Gastrocnemius medialis (tissue), 4 donors: ENCODE measurements at regions of chr6 and their contacts with region 1.

Region 1: DNA sequence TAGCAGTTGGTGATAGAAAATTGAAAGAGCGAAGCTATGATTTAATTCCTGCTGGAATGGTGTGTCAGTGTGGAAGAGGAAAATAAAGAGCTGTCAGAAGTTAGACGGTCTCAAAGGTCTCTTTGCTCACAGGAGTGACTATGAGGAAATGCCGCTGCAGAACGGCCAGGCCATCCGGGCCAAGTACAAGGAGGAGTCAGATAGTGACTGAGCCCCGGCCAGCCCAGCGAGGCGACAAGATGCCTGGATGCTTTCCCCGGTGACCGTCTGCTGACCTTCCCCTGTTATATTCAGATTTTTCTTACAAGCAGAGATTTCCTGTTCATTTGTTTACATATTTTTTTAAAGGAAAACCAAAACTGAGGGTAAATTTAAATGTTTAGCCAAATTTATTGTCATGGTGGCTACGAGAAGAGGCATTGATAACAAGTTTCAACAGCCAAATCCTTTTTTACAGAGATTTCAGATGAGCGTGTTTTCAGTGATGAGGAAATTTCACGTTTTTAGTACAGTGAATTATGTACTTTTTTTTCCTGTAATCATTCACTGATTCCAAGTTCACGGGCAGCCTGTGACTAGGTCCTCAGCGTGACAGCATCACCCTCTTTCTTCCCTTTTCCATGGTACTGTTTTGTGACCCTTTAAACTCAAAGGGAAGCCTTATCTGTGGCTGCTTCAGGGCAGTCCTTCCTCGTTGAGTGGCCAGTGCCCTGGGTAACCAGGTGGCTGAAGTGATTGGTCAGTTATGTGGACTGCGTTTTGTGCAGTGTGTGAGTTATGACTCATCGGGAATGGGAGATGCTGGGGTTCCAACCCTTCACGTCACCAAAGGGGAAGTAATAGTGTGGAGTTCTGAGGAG is 12.6 kb downstream of the DYNLT1 start:
- DNase-seq: peak; percentile 76 to 91
- ATAC-seq: peak; percentile 82
- H3K4me3 ChIP-seq: peak overlapping the region in 1 of 4 donors; percentile 8
- H3K27ac ChIP-seq: peak overlapping the region; percentile 71 to 86 (median 80)
- H3K4me1 ChIP-seq: peaks cover 21 to 33% of the 10 kb centered on the region in 2 donors
- H3K27me3 ChIP-seq: no peaks in the 10 kb centered on the region
- CTCF ChIP-seq: peak in 1 of 5 experiments; percentile 3
- POLR2A ChIP-seq: peak in 1 of 2 donors; percentile 19

Region 2: DNA sequence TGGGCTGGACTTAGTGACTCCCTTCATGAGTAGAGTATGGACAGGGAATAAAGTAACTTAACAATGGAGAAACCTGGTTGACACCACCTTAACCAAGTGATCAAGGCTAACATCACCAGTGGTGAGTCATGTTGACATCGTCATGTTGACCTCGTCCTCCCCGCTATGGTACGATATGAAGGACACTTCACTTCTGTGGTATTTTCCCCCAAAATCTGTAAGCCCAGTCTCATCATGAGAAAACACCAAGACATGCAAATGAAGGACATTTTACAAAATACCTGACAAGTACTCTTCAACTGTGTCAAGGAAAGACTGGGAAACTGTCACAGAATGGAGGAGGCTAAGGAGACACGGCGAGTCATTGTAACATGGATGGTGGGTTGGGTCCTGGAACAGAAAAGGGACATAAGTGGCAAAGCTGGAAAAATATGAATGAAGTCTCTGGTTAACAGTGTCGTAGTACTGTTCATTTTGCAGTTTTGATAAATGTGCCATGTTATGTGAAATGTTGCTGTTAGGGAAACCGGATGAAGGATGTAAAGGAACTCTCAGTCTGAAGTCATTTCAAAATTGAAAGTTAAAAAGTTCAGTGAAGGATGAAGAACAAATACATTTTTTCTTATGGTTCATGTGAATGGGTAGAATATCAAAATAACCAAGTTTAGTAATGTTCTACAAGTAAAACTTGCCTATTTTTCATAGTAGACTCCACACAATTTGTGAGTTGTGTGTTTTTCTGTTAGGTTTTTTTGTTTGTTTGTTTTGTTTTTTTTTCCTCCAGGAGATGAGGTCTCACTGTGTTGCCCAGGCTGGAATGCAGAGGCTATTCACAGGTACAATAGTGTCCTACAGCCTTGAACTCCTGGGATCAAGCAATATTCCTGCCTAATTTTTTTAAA is 1556.1 kb before region 1 on chr6:
- in situ Hi-C with region 1: no loop called
- intact Hi-C with region 1: no loop called
- DNase-seq: no peak
- ATAC-seq: no peak
- H3K4me3 ChIP-seq: no peak overlapping the region
- H3K27ac ChIP-seq: no peak overlapping the region
- H3K4me1 ChIP-seq: peaks cover 25 to 43% of the 10 kb centered on the region in 2 donors
- H3K27me3 ChIP-seq: no peaks in the 10 kb centered on the region
- CTCF ChIP-seq: no peak
- POLR2A ChIP-seq: no peak

Region 3: DNA sequence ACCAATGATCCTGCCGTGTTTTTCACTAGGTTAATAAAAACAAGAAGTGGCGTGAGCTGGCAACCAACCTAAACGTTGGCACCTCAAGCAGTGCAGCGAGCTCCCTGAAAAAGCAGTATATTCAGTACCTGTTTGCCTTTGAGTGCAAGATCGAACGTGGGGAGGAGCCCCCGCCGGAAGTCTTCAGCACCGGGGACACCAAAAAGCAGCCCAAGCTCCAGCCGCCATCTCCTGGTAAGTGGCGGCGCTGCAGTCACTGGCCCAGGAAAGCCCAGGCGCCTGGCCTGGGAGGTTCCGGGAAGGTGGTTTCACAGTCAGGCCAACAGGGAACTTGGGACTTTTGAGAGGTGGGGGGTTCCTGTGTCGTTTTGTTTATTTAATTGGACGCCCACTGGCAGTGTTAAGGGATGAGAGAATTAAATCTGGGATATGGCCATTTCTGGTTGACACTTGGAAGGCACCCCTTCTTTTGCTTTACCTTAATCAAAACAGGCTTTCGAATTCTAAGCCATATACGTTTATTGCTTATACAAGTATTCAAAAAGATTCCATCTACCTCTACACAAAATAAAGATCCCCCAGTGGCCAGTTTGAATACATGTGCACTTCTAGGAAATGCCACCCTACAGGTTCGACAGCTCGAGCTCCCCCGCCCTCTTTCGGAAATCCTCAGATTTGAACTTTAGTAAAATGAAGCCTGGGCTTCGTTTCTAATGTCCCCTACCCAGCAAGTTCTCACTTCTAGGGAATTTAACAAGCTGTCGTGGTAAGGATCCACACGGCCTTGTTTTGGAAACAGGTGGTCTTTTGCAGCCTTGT is 1447.5 kb before region 1 on chr6:
- in situ Hi-C with region 1: no loop called
- intact Hi-C with region 1: loop called (anchors 5 kb)
- DNase-seq: peak; percentile 41 to 65
- ATAC-seq: peak; percentile 22 to 40
- H3K4me3 ChIP-seq: no peak overlapping the region
- H3K27ac ChIP-seq: peak overlapping the region in 3 of 4 donors; percentile 9 to 46 (median 24)
- H3K4me1 ChIP-seq: peaks cover 26 to 27% of the 10 kb centered on the region in 2 donors
- H3K27me3 ChIP-seq: no peaks in the 10 kb centered on the region
- CTCF ChIP-seq: peak; percentile 83 to 92 (median 90)
- POLR2A ChIP-seq: no peak

Region 4: GRCh38 chr6:158488065-158488464 is 143.8 kb before region 1 on chr6:
- in situ Hi-C with region 1: no loop called
- intact Hi-C with region 1: no loop called
- DNase-seq: no peak
- ATAC-seq: no peak
- H3K4me3 ChIP-seq: no peak overlapping the region
- H3K27ac ChIP-seq: no peak overlapping the region
- H3K4me1 ChIP-seq: no peaks in the 10 kb centered on the region
- H3K27me3 ChIP-seq: no peaks in the 10 kb centered on the region
- CTCF ChIP-seq: no peak
- POLR2A ChIP-seq: no peak

Region 5: DNA sequence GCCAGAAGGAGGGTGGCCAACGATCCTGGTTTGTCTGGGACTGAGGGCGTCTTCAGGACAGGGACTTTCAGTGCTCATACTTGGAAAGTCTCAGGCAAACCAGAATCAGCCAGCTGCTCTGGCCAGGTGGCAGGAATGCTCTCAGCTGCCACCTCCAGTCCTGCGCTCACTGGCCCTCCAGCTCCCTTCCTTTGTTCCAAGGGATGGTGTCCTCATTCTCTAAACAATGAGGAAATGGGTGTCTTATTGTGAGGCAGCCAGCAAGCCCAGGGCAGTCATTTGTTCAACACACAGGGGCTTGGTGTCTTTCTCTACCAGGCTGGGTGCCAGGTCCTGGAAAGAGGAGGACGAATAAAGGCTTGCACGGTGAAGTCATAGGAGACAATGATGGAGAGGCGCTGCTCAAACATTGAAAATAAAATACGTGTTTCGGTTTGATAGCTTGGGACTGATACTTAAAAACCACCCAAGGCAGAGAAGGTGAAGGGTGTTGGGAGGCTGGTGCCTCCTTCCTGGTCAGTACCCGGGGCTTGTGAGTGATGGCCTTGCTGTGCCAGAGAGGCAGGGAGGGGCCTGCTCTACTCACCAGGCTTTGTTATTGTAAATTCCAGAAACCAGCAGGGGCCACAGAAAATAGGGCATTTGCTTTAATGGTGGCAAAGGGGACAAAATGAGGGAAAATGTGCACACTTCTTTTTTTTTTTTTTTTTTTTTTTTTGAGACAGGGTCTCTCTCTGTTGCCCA is 83.3 kb before region 1 on chr6:
- in situ Hi-C with region 1: no loop called
- intact Hi-C with region 1: no loop called
- DNase-seq: no peak
- ATAC-seq: no peak
- H3K4me3 ChIP-seq: no peak overlapping the region
- H3K27ac ChIP-seq: no peak overlapping the region
- H3K4me1 ChIP-seq: no peaks in the 10 kb centered on the region
- H3K27me3 ChIP-seq: no peaks in the 10 kb centered on the region
- CTCF ChIP-seq: no peak
- POLR2A ChIP-seq: no peak

Region 6: GRCh38 chr6:158660333-158660754 is 28.4 kb after region 1 on chr6:
- in situ Hi-C with region 1: no loop called
- intact Hi-C with region 1: loop called (anchors 1 kb)
- DNase-seq: no peak
- ATAC-seq: no peak
- H3K4me3 ChIP-seq: no peak overlapping the region
- H3K27ac ChIP-seq: no peak overlapping the region
- H3K4me1 ChIP-seq: peaks cover 14 to 30% of the 10 kb centered on the region in 2 donors
- H3K27me3 ChIP-seq: no peaks in the 10 kb centered on the region
- CTCF ChIP-seq: peak in 3 of 5 experiments; percentile 18 to 41 (median 19)
- POLR2A ChIP-seq: no peak

Region 7: DNA sequence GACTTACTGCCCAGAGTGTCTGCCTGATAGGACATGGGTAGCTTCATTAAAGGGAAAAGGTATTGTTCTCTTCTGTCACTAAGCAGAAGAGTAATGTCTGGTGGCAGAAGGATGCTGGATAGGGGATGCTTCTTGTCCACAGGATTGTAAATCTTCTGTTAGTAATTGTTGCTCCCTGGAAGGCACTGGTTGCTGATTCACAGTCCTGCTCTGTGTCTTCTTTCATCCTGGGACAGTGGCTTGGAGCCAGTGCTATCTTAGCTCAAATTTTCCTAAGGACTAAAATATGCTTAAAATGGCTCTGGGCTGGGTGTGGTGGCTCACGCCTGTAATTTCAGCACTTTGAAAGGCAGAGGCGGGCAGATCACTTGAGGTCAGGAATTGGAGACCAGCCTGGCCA is 65.9 kb after region 1 on chr6:
- in situ Hi-C with region 1: loop called in 2 of 4 experiments (anchors 5 kb)
- intact Hi-C with region 1: no loop called
- DNase-seq: no peak
- ATAC-seq: no peak
- H3K4me3 ChIP-seq: no peak overlapping the region
- H3K27ac ChIP-seq: no peak overlapping the region
- H3K4me1 ChIP-seq: no peaks in the 10 kb centered on the region
- H3K27me3 ChIP-seq: no peaks in the 10 kb centered on the region
- CTCF ChIP-seq: no peak
- POLR2A ChIP-seq: no peak

Region 8: DNA sequence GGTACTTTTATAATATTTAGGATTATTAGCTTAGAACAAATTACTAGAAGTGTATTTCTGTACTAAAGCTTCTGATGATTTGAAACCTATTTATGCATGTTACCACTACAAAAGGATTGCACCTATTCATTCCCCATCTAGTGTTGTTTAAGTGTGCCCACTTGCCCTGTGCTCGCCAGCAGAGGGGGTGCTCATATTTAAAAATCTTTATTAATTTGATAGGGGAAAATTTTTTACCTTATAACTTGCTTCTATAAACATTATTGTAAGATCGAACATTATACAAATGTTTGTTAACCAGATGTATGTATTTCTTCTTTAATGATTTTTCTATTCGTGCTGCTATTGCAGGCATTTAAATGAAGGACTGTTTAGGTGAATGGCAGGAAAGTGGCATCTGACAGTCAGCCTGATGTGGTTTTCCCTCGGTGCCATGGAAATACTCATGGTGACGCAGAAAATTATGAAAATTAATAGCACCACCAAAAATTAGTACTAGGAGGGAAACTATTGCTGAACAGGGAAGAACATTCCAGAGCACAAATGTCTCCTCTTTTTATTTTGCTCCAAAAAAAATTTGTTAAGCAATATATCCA is 493.2 kb after region 1 on chr6:
- in situ Hi-C with region 1: no loop called
- intact Hi-C with region 1: loop called (anchors 10 kb)
- DNase-seq: no peak
- ATAC-seq: no peak
- H3K4me3 ChIP-seq: no peak overlapping the region
- H3K27ac ChIP-seq: peak overlapping the region; percentile 89 to 93 (median 90)
- H3K4me1 ChIP-seq: peaks cover 16 to 40% of the 10 kb centered on the region in 2 donors
- H3K27me3 ChIP-seq: no peaks in the 10 kb centered on the region
- CTCF ChIP-seq: no peak
- POLR2A ChIP-seq: no peak